ENCODE measurements at regions of chr18 and their contacts with region 1.

Region 1: DNA sequence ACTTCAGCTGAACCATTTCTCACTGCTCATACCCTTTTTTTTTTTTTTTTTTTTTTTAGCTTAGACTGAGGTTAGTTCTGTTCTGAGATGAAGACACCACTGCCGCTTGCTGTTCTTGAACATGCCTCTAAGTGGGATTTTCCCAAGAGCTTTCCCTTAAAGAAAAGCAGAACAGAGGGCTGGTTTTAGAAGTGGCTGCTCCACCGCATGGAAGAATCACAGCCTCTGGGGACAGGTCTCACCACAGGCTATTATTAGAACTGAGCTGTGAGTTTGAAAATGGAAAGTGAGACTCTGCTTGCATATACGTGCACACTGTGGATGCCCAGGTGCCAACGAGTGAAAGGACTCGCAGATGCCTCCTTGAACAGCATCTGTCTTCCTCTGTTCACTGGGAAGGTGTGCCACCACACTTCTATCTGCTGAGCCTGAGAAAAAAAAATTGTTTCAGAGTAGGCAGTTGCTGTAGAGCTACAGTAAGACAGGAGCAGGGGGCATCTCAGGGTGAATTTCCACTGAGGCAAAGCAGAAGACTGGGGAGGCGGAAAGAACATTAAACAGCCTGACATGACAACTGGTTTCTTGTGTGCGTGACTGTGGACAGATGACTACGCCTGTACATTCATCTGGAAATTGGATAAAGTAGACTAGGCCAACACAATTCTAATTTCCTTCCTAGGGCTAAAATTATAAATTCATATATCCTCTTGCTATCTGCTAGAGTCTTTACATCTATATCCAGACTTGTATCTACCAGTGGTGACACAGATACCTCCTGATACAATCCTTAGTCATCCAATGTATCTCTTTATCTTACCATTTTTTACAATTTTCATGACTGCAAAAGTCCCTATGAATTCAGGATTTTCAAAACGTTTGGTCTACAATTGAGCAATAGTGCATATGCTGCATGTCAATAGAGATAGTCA is 1045.7 kb upstream of the CELF4 start:
- DNase-seq: peak; percentile 39
- H3K4me3 Mint-ChIP-seq: no peak overlapping the region
- H3K27ac Mint-ChIP-seq: peak overlapping the region; percentile 69
- H3K4me1 Mint-ChIP-seq: peaks cover 2% of the 10 kb centered on the region
- H3K27me3 Mint-ChIP-seq: no peaks in the 10 kb centered on the region

Region 2: GRCh38 chr18:38497266-38497665 is 114.0 kb before region 1 on chr18:
- CTCF ChIA-PET with region 1: no interaction called
- POLR2A ChIA-PET with region 1: interaction called, 3 read pairs
- intact Hi-C with region 1: loop called (anchors 2 kb)
- DNase-seq: peak; percentile 10
- H3K4me3 Mint-ChIP-seq: no peak overlapping the region
- H3K27ac Mint-ChIP-seq: no peak overlapping the region
- H3K4me1 Mint-ChIP-seq: peaks cover 2% of the 10 kb centered on the region
- H3K27me3 Mint-ChIP-seq: no peaks in the 10 kb centered on the region

Region 3: DNA sequence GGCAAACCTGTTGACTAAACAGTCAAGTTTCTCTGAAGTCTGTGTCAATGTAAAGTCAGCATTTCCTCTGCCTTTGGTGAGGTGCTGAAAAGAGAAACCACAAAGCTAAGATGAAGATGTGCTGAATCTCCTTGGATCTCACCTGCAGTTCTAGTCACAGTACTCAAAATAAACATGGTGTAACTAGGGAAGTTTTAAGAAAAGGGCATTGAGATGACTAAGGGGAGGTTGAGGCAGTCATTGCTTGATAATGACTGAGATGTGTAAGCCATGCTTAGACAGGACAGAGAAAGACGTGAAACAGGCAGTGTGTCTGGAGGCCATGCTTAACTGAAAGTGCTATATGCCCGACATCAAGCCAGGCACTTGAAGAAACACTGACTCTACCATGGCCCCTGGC is 35.7 kb before region 1 on chr18:
- CTCF ChIA-PET with region 1: no interaction called
- POLR2A ChIA-PET with region 1: no interaction called
- intact Hi-C with region 1: loop called (anchors 2 kb)
- DNase-seq: peak; percentile 13
- H3K4me3 Mint-ChIP-seq: peak overlapping the region; percentile 45
- H3K27ac Mint-ChIP-seq: peak overlapping the region; percentile 75
- H3K4me1 Mint-ChIP-seq: peaks cover 19% of the 10 kb centered on the region
- H3K27me3 Mint-ChIP-seq: no peaks in the 10 kb centered on the region

Region 4: DNA sequence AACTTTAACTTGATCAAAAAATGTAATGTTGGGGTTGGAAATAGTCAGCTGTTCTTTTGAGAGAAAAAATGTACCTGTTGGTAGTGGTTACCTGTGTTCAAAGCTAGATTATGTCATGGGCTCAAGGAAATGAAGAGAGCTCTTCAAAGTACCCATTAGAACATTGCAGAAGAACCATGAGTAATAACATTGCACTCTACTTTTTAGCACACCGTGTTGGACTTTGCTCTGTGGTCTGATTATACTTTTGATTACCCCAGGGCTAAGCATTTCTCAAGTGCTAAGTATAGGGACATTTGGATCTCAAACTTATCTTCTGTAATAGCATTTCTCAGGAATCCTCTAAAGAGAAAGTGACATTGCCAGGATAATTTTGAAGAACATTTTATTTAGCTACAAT is 77.1 kb after region 1 on chr18:
- CTCF ChIA-PET with region 1: no interaction called
- POLR2A ChIA-PET with region 1: no interaction called
- intact Hi-C with region 1: no loop called
- DNase-seq: no peak
- H3K4me3 Mint-ChIP-seq: no peak overlapping the region
- H3K27ac Mint-ChIP-seq: no peak overlapping the region
- H3K4me1 Mint-ChIP-seq: no peaks in the 10 kb centered on the region
- H3K27me3 Mint-ChIP-seq: no peaks in the 10 kb centered on the region

Region 5: GRCh38 chr18:38751898-38752297 is 140.6 kb after region 1 on chr18:
- CTCF ChIA-PET with region 1: no interaction called
- POLR2A ChIA-PET with region 1: no interaction called
- intact Hi-C with region 1: loop called (anchors 1 kb)
- DNase-seq: peak; percentile 35
- H3K4me3 Mint-ChIP-seq: no peak overlapping the region
- H3K27ac Mint-ChIP-seq: no peak overlapping the region
- H3K4me1 Mint-ChIP-seq: peaks cover 10% of the 10 kb centered on the region
- H3K27me3 Mint-ChIP-seq: no peaks in the 10 kb centered on the region

Region 6: DNA sequence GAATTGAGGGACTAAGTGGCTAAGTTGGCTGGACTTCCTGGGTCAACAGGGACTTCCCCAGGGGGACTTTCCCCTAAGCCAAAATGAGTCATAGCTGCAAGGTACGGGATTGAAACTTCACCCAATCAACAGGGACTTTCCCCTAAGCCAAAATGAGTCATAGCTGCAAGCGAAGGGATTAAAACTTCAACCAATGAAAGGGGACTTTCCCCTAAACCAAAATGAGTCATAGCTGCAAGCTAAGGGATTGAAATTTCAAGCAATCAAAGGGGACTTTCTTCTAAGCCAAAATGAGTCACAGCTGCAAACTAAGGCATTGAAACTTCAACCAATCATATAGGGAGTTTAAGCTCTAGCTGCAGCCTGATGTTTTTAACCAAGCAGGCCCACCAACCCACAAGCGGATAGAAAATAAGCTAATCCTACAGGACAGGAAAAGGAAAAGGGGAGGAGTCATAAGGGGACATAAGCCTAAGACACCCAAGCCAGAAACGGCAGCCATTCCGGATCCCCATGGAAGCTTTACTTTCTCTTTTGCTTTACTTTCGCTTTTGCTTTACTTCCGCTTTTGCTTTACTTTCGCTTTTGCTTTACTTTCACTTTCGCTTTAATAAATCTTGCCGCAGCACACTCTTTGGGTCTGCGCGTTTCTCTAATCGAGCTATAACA is 329.7 kb after region 1 on chr18:
- CTCF ChIA-PET with region 1: no interaction called
- POLR2A ChIA-PET with region 1: no interaction called
- intact Hi-C with region 1: loop called (anchors 1 kb)
- DNase-seq: peak; percentile 70
- H3K4me3 Mint-ChIP-seq: peak overlapping the region; percentile 69
- H3K27ac Mint-ChIP-seq: peak overlapping the region; percentile 97
- H3K4me1 Mint-ChIP-seq: peaks cover 30% of the 10 kb centered on the region
- H3K27me3 Mint-ChIP-seq: peaks cover 3% of the 10 kb centered on the region